Mammary epithelial cell (primary cell): ENCODE measurements at regions of chr19 and their contacts with region 1.

Region 1: DNA sequence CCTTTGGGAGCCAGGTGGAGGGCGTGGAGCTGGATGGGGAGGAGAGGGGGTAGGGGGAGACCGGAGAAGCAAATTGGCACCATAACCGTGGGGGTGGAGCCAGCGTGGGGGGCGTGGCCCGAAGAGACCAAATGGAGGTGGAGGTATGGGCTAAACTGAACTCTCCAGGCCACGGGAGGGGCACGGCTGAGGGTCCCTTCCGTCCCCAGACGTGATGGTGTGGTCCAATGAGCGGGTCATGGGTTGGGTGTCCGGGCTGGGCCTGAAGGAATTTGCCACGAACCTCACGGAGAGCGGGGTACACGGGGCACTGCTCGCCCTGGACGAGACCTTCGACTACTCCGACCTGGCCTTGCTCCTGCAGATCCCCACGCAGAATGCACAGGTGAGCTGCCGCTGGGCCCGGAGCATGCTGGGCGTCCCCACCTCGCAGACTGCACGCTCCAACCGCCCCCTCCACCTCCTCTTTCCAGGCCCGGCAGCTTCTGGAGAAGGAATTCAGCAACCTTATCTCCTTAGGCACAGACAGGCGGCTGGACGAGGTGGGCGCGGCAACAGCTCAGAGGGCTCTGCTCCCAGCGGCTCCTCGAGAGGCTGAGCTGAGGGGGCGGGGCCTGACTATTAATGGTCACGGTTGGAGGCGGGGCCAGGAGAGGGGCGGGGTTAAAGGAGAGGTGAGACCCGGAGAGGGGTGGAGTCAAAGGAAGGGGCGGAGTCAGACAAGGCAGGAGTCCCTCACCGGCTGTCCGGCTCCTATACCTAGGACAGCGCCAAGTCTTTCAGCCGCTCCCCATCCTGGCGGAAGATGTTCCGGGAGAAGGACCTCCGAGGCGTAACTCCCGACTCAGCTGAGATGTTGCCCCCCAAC is 6.2 kb downstream of the HRC start:
- DNase-seq: peak; percentile 91
- H3K4me3 ChIP-seq: peak overlapping the region; percentile 33 to 82 (median 60)
- H3K27ac ChIP-seq: no peak overlapping the region
- H3K4me1 ChIP-seq: peaks cover 19% of the 10 kb centered on the region
- H3K27me3 ChIP-seq: no peaks in the 10 kb centered on the region
- CTCF ChIP-seq: no peak

Region 2: DNA sequence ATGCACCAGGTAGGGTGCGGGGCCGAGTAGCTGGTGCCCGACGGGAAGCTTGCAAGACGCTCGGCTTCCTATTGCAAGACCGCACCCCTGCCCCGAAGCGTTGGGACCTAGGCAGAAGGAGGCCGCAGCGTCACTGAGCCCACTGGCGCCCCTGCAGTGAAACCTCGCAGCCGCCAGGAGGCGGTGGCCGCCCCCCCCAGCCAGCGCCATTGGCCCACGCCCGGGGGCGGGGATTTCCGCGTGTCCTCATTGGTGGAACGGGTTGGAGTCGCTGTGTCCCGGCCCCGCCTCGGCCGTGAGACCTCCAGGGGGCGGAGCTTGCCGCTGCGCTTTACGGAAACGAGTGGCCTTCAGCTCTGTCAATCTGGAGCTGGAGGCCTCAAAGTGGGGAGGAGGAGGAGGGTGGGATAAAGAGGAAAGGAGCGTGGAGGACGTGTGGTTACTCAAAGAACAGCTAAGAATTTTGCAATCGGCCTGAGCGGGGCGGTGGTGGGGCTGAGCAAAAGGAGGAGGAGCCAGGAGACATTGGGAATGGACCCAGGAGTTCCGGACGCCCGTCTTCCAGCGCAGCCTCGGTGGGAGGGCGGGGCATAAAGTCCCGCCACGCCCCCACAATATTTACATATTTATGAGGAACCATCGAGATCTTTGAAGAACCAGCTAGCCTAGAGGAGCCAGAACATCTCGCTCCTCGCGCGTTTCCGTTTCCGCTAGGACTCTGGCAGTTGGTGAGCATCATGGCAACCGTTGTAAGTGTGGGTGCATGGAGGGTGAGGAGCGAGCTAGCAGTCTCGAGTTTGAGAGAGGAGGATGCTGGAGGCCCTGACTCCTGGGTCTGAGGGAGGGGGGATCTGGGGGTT is 155.6 kb before region 1 on chr19 and contains the starts of genes GYS1 and RUVBL2:
- CTCF ChIA-PET with region 1: no interaction called
- dilution Hi-C with region 1: no loop called
- in situ Hi-C with region 1: no loop called
- intact Hi-C with region 1: loop called (anchors 5 kb)
- DNase-seq: peak; percentile 100
- H3K4me3 ChIP-seq: peak within 1 kb of the TSS; percentile 81 to 89 (median 86)
- H3K27ac ChIP-seq: peak within 1 kb of the TSS; percentile 86
- H3K4me1 ChIP-seq: peaks cover 28% of the 10 kb centered on the region
- H3K27me3 ChIP-seq: no peaks in the 10 kb centered on the region
- CTCF ChIP-seq: peak; percentile 83 to 92
- total RNA-seq, gene GYS1: 40.0 to 79.8 TPM
- total RNA-seq, gene RUVBL2: 108 to 148 TPM

Region 3: DNA sequence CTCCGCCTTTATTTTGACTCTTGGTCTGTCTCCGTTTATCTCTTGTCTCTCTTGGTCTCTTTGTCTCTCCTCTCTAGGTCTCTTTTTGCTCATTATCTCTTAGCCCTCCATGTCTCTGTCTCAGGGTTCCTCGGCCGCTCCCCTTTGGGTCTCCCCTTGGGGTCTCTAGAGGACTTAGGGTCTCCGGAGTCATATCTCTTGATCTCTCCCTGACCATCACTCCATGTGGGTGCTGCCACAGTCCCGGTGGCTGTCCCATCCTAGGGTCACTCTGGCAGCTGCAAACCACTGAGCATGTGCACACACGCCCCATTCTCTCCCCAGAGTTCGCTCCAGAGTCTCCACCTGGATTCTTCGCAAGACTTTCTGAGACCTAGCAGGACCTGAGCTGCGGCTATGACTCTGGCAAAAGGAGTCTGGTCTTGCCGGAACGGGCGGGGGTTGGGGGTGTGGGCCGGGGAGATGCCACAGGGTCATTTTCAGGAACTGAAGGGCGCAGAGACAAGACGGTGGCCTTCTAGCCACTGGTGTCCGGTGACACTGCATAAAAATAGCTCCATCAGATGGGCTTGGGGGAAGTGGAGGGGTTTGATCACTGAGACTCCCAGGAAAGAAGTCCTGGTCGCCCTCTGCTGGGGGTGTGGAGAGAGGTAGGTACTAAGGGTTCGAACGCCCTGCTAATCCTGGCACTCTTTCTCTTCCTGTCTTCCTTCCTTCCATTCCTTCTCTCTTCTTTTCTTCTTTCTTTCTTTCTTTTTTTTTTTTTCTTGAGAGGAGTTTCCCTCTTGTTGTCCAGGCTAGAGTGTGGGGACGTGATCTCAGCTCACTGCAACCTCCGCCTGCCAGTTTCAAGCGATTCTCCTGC is 75.3 kb before region 1 on chr19:
- CTCF ChIA-PET with region 1: interaction called, 3 read pairs
- dilution Hi-C with region 1: no loop called
- in situ Hi-C with region 1: no loop called
- intact Hi-C with region 1: loop called (anchors 2 kb)
- DNase-seq: peak; percentile 57
- H3K4me3 ChIP-seq: peak overlapping the region in 1 of 3 experiments; percentile 14
- H3K27ac ChIP-seq: no peak overlapping the region
- H3K4me1 ChIP-seq: peaks cover 13% of the 10 kb centered on the region
- H3K27me3 ChIP-seq: peaks cover 18% of the 10 kb centered on the region
- CTCF ChIP-seq: peak; percentile 26 to 49

Region 4: GRCh38 chr19:49097455-49098288 is 51.3 kb before region 1 on chr19:
- CTCF ChIA-PET with region 1: interaction called, 3 read pairs
- dilution Hi-C with region 1: no loop called
- in situ Hi-C with region 1: loop called in 1 of 2 experiments (anchors 10 kb)
- intact Hi-C with region 1: loop called (anchors 1 kb)
- DNase-seq: peak; percentile 67
- H3K4me3 ChIP-seq: no peak overlapping the region
- H3K27ac ChIP-seq: no peak overlapping the region
- H3K4me1 ChIP-seq: peaks cover 7% of the 10 kb centered on the region
- H3K27me3 ChIP-seq: no peaks in the 10 kb centered on the region
- CTCF ChIP-seq: peak; percentile 98 to 100

Region 5: DNA sequence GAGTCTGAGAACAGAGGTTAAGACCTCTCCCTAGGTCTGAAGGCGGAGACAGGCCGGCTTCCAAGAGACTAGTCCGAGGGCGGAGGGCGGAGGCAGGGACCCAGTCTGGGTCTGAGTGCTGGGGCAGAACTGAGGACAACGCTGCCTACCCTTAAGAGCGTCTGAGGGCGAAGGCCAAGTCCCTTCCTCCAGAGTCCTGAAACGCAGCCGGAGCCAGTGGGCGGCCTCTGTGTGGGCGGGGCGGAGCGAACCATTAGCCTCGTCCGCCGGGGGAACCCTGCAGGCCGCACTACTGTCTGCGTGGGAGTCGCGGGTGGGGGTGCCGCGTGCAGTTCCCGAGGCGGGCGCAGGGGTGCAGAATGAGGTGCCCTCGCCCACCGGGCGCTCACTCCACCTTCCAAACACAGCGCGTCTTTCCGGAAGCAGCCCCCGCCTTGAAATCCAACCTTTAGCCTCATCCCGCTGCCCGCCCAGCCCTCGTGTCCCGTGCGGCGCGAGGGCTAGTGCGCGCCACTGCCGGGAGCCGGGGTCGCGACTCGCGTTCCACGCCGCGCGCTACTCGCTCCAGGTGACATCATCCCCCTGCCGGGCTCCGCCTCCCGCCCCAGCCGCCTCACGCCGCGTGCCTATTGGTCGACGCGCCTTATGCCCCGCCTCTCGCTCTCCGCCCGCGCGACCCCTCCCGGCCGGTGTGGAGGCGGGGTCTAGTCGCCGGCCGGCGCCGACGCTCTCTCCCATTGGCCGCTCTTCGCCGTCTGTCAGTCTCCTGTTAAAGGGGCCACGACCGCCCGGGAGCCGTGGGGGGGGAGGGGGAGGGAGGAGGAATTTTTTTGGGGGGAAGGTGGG is 30.2 kb before region 1 on chr19 and contains the start of gene C19orf73:
- CTCF ChIA-PET with region 1: no interaction called
- dilution Hi-C with region 1: no loop called
- in situ Hi-C with region 1: no loop called
- intact Hi-C with region 1: loop called (anchors 2 kb)
- DNase-seq: peak; percentile 93
- H3K4me3 ChIP-seq: peak within 1 kb of the TSS; percentile 73 to 89 (median 78)
- H3K27ac ChIP-seq: peak within 1 kb of the TSS; percentile 71
- H3K4me1 ChIP-seq: peaks cover 25% of the 10 kb centered on the region
- H3K27me3 ChIP-seq: no peaks in the 10 kb centered on the region
- CTCF ChIP-seq: no peak
- total RNA-seq, gene C19orf73: 0.67 to 2.0 TPM

Region 6: DNA sequence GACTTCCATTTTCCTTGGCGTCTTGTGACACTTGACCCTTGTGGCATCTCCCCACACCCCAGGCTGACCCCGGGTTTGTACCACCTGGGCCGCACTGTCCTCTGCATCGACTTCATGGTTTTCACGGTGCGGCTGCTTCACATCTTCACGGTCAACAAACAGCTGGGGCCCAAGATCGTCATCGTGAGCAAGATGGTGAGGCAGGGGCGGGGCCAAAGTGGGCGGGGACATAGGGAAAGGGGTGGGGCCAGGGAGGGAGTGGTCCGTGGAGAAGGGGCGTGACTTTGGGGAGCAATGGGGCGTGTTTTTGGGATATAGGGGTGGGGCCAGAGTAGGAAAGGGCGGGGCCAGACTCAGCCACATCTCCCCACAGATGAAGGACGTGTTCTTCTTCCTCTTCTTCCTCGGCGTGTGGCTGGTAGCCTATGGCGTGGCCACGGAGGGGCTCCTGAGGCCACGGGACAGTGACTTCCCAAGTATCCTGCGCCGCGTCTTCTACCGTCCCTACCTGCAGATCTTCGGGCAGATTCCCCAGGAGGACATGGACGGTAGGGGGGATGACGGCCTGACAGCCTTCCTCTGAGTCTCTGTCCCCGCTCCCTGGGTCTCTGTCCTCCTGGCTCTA is 51.3 kb after region 1 on chr19:
- CTCF ChIA-PET with region 1: interaction called, 4 read pairs
- dilution Hi-C with region 1: no loop called
- in situ Hi-C with region 1: loop called in 1 of 2 experiments (anchors 10 kb)
- intact Hi-C with region 1: loop called (anchors 2 kb)
- DNase-seq: no peak
- H3K4me3 ChIP-seq: no peak overlapping the region
- H3K27ac ChIP-seq: no peak overlapping the region
- H3K4me1 ChIP-seq: peaks cover 25% of the 10 kb centered on the region
- H3K27me3 ChIP-seq: no peaks in the 10 kb centered on the region
- CTCF ChIP-seq: no peak

Region 7: DNA sequence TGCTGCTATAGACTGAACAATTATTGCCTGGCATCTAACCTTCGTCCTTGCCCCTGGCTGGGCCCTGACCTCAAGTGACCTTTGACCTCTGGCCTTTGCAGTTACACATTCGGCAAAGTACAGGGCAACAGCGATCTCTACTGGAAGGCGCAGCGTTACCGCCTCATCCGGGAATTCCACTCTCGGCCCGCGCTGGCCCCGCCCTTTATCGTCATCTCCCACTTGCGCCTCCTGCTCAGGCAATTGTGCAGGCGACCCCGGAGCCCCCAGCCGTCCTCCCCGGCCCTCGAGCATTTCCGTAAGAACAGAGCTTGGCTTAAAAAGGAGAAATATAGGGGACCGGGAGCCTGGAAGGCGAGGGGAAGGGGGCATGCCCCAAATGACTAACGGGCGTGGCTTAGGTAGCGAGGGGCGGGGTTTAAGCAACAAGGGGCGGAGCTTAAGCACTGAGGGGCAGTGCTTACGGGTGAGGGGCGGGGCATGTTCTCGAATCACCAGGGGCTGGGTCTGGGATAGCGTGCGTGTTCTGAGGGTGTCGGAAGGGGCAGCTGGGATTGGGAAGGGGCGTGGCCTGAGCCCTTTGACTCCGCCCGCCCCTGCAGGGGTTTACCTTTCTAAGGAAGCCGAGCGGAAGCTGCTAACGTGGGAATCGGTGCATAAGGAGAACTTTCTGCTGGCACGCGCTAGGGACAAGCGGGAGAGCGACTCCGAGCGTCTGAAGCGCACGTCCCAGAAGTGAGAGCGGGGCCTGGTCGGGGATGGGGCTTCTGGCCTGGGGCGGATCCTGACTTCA is 61.3 kb after region 1 on chr19:
- CTCF ChIA-PET with region 1: no interaction called
- dilution Hi-C with region 1: no loop called
- in situ Hi-C with region 1: loop called in 1 of 2 experiments (anchors 10 kb)
- intact Hi-C with region 1: loop called (anchors 2 kb)
- DNase-seq: no peak
- H3K4me3 ChIP-seq: no peak overlapping the region
- H3K27ac ChIP-seq: no peak overlapping the region
- H3K4me1 ChIP-seq: no peaks in the 10 kb centered on the region
- H3K27me3 ChIP-seq: no peaks in the 10 kb centered on the region
- CTCF ChIP-seq: no peak

Region 8: DNA sequence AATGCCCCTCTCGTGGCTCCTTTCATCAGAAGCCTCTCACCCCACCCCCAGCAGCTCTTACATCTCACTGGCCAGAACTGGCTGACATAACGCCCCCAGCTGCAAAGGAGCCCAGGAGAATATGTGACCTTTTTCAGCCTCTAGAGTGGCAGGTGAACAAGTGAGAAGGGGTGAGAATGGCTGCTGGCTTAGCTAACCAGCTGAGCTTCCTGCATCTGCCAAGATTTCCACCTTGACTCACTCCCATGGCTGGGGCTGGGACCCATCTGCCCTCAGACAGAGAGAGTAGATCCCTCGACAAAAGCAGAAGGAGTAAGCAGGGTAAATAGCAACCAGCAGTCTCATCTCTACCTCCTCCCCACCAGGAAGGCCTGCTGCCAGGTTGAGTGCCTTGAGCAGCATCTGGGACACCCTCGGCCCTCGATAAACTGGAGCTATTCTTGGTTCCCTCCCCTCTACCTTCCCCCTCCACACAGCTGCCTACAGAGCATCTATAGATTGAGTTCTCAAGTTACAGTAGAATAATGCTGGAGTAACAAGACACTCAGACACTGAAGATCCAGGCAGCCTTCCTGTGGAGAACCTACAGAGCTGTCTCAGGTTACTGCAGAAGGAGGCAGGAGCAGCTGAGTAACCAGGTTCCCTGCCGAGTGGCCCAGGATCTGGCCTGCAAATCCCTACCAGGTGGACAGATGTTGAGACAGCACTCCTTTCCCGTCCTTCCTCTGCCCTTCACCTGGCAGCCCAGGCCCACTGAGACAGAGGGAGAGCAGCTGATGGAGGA is 254.6 kb after region 1 on chr19:
- CTCF ChIA-PET with region 1: no interaction called
- dilution Hi-C with region 1: no loop called
- in situ Hi-C with region 1: no loop called
- intact Hi-C with region 1: no loop called
- DNase-seq: no peak
- H3K4me3 ChIP-seq: no peak overlapping the region
- H3K27ac ChIP-seq: no peak overlapping the region
- H3K4me1 ChIP-seq: no peaks in the 10 kb centered on the region
- H3K27me3 ChIP-seq: no peaks in the 10 kb centered on the region
- CTCF ChIP-seq: no peak